Caco-2 (cell line): ENCODE measurements at regions of chr19 and their contacts with region 1.

Region 1: DNA sequence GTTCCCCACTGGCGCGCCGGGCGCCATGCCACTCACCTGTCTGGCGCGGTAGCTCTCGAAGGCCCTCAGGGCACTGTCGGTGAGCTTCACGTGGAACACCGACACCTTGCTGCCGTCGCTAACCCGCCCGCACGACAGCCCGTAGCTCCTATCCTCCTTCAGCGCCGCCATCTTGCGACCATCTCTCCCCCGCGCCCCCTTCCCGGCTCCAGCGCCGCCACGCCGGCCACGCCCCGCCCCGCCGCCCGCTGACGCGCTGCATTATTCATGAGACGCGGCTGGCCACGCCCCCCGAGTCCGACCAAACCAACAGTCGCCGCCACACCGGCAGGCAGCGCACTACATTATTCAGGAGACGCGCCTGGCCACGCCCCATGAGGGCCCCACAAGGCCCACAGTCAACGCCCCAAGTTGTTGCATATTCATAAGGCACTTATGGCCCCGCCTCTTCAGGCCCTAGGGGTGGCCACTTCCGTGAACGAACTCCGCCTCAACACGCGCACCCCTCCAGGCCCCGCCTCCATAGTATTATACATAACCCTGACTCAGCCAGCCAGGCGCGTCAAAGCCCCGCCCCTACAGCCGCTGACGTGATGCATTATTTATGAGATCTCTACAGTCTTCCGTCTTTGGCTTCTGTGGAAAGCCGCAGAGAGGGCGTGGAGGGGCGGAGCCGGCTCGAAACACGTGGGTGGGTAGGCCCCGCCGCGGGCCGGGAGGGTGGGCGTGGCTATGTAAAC is at the start of gene ELL:
- DNase-seq: peak; percentile 99 to 100
- H3K4me3 ChIP-seq: peak within 1 kb of the TSS; percentile 90
- H3K4me3 Mint-ChIP-seq: peak within 1 kb of the TSS; percentile 81
- H3K27ac Mint-ChIP-seq: peak within 1 kb of the TSS; percentile 89
- H3K4me1 ChIP-seq: peaks cover 5% of the 10 kb centered on the region
- H3K4me1 Mint-ChIP-seq: no peaks in the 10 kb centered on the region
- H3K27me3 ChIP-seq: no peaks in the 10 kb centered on the region
- H3K27me3 Mint-ChIP-seq: no peaks in the 10 kb centered on the region
- CTCF ChIP-seq: peak in 1 of 2 experiments; percentile 14
- total RNA-seq, gene ELL: 11.2 and 12.1 TPM in 2 replicates

Region 2: GRCh38 chr19:18488838-18489626 is 33.0 kb before region 1 on chr19:
- CTCF ChIA-PET with region 1: interaction called, 28 read pairs
- POLR2A ChIA-PET with region 1: interaction called, 3 read pairs
- intact Hi-C with region 1: loop called (anchors 5 kb)
- DNase-seq: peak; percentile 68 to 80
- H3K4me3 ChIP-seq: no peak overlapping the region
- H3K4me3 Mint-ChIP-seq: no peak overlapping the region
- H3K27ac Mint-ChIP-seq: no peak overlapping the region
- H3K4me1 ChIP-seq: no peaks in the 10 kb centered on the region
- H3K4me1 Mint-ChIP-seq: no peaks in the 10 kb centered on the region
- H3K27me3 ChIP-seq: no peaks in the 10 kb centered on the region
- H3K27me3 Mint-ChIP-seq: no peaks in the 10 kb centered on the region
- CTCF ChIP-seq: peak; percentile 36 to 79

Region 3: DNA sequence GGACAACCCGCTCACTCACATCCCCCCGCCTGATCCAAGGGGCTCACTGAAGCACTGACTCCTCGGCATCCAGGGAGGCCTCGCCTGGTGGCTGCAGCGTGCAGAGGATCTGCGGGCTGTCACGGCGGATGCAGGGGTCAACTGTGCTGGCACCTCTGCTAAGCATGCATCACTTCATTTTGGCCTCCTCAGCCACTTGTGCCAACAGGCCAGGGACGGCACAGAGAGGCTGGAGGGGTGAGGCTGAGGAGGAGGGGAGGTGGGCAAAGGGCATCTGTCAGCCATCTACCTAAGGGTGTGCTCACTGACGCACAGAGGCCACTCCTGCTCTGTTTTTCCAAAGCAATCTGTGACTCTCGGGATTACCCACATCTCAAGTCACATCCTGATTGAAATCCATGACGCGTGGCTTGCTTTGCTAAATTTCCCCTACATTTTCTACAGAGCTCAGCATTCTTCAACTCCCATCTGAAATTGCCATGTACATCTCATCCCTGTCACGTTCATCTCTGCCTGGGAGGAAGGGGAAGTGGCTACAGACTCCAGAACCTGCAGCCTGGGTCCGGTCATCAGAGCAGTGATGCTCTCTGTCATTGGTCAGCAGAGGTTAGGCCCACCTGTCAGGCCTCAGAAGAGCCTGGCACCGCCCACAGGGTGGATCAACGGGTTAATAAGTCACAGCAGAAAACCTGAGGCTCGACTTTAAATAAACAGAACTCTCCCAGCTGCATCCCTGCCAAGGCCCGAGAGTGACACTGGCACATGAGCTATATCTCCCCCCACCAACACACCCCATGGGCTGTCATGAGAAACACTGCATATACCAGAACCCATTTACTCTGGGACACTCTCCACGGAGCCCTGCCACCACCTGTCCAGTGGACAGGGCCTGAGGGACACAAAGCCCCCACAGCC is 17.8 kb before region 1 on chr19:
- CTCF ChIA-PET with region 1: interaction called, 11 read pairs
- POLR2A ChIA-PET with region 1: interaction called, 4 read pairs
- intact Hi-C with region 1: loop called (anchors 1 kb)
- DNase-seq: peak; percentile 80 to 81
- H3K4me3 ChIP-seq: no peak overlapping the region
- H3K4me3 Mint-ChIP-seq: peak overlapping the region; percentile 5
- H3K27ac Mint-ChIP-seq: no peak overlapping the region
- H3K4me1 ChIP-seq: peaks cover 43% of the 10 kb centered on the region
- H3K4me1 Mint-ChIP-seq: peaks cover 33% of the 10 kb centered on the region
- H3K27me3 ChIP-seq: no peaks in the 10 kb centered on the region
- H3K27me3 Mint-ChIP-seq: no peaks in the 10 kb centered on the region
- CTCF ChIP-seq: no peak

Region 4: GRCh38 chr19:18557474-18558201 is 35.6 kb after region 1 on chr19 and contains the start of gene KXD1:
- CTCF ChIA-PET with region 1: interaction called, 12 read pairs
- POLR2A ChIA-PET with region 1: interaction called, 5 read pairs
- intact Hi-C with region 1: loop called (anchors 5 kb)
- DNase-seq: peak; percentile 91 to 97
- H3K4me3 ChIP-seq: peak within 1 kb of the TSS; percentile 98
- H3K4me3 Mint-ChIP-seq: peak within 1 kb of the TSS; percentile 70
- H3K27ac Mint-ChIP-seq: peak within 1 kb of the TSS; percentile 60
- H3K4me1 ChIP-seq: no peaks in the 10 kb centered on the region
- H3K4me1 Mint-ChIP-seq: no peaks in the 10 kb centered on the region
- H3K27me3 ChIP-seq: no peaks in the 10 kb centered on the region
- H3K27me3 Mint-ChIP-seq: no peaks in the 10 kb centered on the region
- CTCF ChIP-seq: no peak
- total RNA-seq, gene KXD1: 77.5 and 80.2 TPM in 2 replicates

Region 5: GRCh38 chr19:18571564-18572300 is 49.7 kb after region 1 on chr19 and contains the start of gene UBA52:
- CTCF ChIA-PET with region 1: interaction called, 10 read pairs
- POLR2A ChIA-PET with region 1: interaction called, 4 read pairs
- intact Hi-C with region 1: loop called (anchors 5 kb)
- DNase-seq: peak; percentile 97 to 98
- H3K4me3 ChIP-seq: peak within 1 kb of the TSS; percentile 98
- H3K4me3 Mint-ChIP-seq: peak within 1 kb of the TSS; percentile 93
- H3K27ac Mint-ChIP-seq: peak within 1 kb of the TSS; percentile 98
- H3K4me1 ChIP-seq: peaks cover 9% of the 10 kb centered on the region; the same call in 1 of the 2 replicates
- H3K4me1 Mint-ChIP-seq: peaks cover 11% of the 10 kb centered on the region
- H3K27me3 ChIP-seq: no peaks in the 10 kb centered on the region
- H3K27me3 Mint-ChIP-seq: no peaks in the 10 kb centered on the region
- CTCF ChIP-seq: no peak
- total RNA-seq, gene UBA52: 1,276 and 1,389 TPM in 2 replicates

Region 6: GRCh38 chr19:18636183-18636968 is 114.3 kb after region 1 on chr19:
- CTCF ChIA-PET with region 1: interaction called, 3 read pairs
- POLR2A ChIA-PET with region 1: no interaction called
- intact Hi-C with region 1: loop called (anchors 1 kb)
- DNase-seq: peak; percentile 98 to 99
- H3K4me3 ChIP-seq: peak overlapping the region; percentile 98
- H3K4me3 Mint-ChIP-seq: peak overlapping the region; percentile 76
- H3K27ac Mint-ChIP-seq: peak overlapping the region; percentile 69
- H3K4me1 ChIP-seq: peaks cover 15% of the 10 kb centered on the region
- H3K4me1 Mint-ChIP-seq: peaks cover 15% of the 10 kb centered on the region
- H3K27me3 ChIP-seq: no peaks in the 10 kb centered on the region
- H3K27me3 Mint-ChIP-seq: peaks cover 6% of the 10 kb centered on the region
- CTCF ChIP-seq: no peak

Region 7: DNA sequence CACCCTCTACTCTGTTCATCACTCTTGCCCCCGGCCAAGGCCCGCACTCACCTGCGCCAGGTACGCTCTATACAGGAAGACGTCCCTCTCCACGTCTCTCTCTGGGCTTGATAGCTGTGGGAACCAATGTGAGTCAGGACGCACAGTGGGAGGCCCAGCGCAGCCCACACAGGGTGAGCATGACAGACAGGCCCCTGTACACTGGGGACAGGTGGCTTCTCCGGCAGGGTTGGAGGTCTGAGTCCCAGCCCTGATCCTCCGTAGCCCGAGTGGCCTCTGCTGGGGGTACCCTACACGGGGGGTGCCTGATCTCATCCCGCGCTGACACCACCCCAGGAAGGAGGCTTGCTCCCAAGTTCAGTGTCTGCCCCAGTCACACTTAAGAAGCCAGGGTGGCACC is 390.9 kb after region 1 on chr19:
- CTCF ChIA-PET with region 1: no interaction called
- POLR2A ChIA-PET with region 1: no interaction called
- intact Hi-C with region 1: no loop called
- DNase-seq: no peak
- H3K4me3 ChIP-seq: no peak overlapping the region
- H3K4me3 Mint-ChIP-seq: no peak overlapping the region
- H3K27ac Mint-ChIP-seq: no peak overlapping the region
- H3K4me1 ChIP-seq: peaks cover 5% of the 10 kb centered on the region; the same call in 1 of the 2 replicates
- H3K4me1 Mint-ChIP-seq: no peaks in the 10 kb centered on the region
- H3K27me3 ChIP-seq: no peaks in the 10 kb centered on the region
- H3K27me3 Mint-ChIP-seq: no peaks in the 10 kb centered on the region
- CTCF ChIP-seq: no peak